Dorsolateral prefrontal cortex (tissue), 120 donors: ENCODE measurements at regions of chr15 and their contacts with region 1.

Region 1: DNA sequence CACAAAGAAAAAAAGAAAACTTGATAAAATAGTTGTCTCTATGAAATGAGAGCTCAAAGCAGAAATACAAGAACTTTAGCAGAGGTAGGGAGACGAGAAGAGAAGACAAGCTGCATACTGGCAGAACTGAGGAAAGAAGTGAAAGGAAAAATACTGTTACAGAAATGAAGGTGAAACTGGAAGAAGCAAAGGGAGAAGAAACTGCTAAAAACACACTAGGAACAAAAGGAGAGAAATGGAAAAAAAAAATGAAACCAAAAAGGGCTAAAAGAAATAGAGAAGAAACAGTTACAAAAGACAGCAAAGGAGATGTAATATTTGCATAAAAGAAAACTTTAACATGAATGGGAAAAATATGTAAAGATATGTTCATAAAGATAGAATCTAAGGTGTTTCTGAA is 27.3 kb upstream of the ANPEP start:
- DNase-seq: no peak
- H3K4me3 ChIP-seq: no peak overlapping the region
- H3K27ac ChIP-seq: no peak overlapping the region
- H3K27me3 ChIP-seq: no peaks in the 10 kb centered on the region
- CTCF ChIP-seq: no peak

Region 2: DNA sequence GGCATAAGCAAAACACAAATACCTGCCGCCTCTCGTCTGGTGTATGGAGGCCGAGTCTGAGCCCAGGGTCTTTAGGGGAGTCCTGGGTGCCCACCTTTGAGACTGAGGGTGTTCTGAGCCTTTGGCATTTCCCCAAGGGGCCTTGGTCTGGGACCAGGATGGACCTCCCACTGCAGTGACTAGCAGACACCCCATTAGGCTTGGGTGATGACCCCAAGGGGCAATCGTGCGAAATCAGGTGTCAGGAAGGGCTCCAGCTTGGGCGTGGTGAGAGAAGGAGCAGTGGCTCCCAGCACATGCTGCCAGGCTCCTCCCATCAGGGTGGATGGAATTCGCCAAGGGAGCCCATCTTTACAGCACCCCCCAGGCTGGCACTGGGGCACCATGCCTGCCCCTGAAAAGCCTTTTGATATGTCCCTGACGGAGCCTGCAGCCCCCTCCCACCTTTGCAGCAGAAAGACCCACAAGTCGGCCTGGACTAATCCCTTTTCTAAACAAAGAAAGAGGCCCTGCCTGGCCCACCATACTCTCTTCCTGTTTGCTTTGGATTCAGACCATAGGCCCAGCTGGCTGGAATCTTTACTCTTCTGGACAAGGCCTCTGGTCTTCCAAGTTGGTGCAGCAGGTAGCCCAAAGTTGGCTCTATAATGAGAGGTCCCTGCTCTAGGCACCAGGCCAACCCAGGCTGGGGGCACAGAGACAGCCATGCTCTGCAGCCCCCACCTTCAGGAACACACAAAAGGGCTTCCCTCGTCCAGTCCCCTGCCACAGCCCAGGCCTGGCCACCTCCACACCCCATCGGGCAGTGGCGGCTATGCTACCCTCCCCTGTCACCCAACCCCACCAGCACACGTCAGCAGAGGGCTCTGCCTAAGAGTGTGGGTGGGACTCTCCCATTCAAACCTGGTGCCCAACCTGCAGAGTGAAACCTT is 32.8 kb before region 1 on chr15:
- intact Hi-C with region 1: no loop called
- DNase-seq: no peak
- H3K4me3 ChIP-seq: no peak overlapping the region
- H3K27ac ChIP-seq: no peak overlapping the region
- H3K27me3 ChIP-seq: peaks cover 0 to 22% (median 13%) of the 10 kb centered on the region in 45 donors
- CTCF ChIP-seq: no peak

Region 3: GRCh38 chr15:89820666-89821611 is 21.0 kb before region 1 on chr15:
- intact Hi-C with region 1: loop called in 1 of 2 experiments (anchors 2 kb)
- DNase-seq: no peak
- H3K4me3 ChIP-seq: no peak overlapping the region
- H3K27ac ChIP-seq: no peak overlapping the region
- H3K27me3 ChIP-seq: peaks cover 0 to 13% (median 2%) of the 10 kb centered on the region in 45 donors
- CTCF ChIP-seq: no peak